CD4-positive, alpha-beta T cell (primary cell): ENCODE measurements at regions of chr17 and their contacts with region 1.

Region 1: GRCh38 chr17:909642-910323 is 69.8 kb downstream of the NXN start:
- DNase-seq: no peak
- ATAC-seq: no peak
- H3K4me3 ChIP-seq: no peak overlapping the region
- H3K4me3 Mint-ChIP-seq: no peak overlapping the region
- H3K27ac ChIP-seq: no peak overlapping the region
- H3K27ac Mint-ChIP-seq: no peak overlapping the region
- H3K4me1 ChIP-seq: no peaks in the 10 kb centered on the region
- H3K4me1 Mint-ChIP-seq: no peaks in the 10 kb centered on the region
- H3K27me3 ChIP-seq: peaks cover 0 to 4% of the 10 kb centered on the region in 2 experiments
- H3K27me3 Mint-ChIP-seq: peaks cover 44% of the 10 kb centered on the region
- CTCF ChIP-seq: no peak

Region 2: DNA sequence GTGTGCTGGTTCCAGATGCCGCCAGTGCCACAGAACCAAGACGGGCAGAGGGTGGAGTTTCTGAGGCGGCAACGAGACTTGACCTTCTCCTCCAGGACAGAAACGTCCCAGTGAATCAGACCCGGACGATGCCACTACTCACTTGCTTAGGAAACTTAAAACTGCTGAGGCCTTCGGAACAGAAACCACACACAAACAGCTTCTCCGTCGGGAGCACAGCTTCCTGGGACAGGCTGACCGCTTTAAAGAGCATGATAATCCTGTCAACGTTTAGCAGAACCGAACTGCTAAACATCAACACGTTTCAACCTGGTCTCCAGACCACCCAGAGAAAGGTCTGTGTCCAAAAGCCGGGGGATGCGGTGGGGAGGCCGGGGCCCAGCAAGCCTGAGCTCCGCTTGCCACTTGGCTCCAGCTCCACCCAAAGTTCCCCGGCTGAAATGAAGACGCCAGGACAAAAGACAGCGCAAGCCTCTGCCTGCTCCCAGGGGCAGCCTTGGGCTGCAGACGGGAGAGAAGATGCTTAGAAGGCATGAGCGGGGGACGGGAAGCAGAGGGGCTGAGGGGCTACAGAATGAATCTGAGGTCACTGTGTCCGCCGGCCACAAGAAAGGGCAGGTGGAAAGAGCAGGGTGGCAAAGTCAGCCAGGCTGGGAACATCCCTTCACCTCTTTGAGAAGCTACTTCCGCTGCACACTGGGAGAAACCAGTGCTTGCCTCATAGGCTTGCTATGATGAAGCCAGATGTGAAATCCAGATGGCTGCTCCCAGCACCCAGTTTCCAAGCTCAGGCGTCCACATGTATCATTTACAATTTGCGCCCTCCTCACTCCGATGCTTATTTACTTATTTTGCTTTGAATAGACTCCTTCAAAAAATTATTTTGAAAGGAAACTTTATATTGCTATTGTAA is 58.7 kb before region 1 on chr17:
- CTCF ChIA-PET with region 1: no interaction called
- POLR2A ChIA-PET with region 1: no interaction called
- intact Hi-C with region 1: loop called in 1 of 2 experiments (anchors 5 kb)
- DNase-seq: no peak
- ATAC-seq: no peak
- H3K4me3 ChIP-seq: no peak overlapping the region
- H3K4me3 Mint-ChIP-seq: no peak overlapping the region
- H3K27ac ChIP-seq: no peak overlapping the region
- H3K27ac Mint-ChIP-seq: no peak overlapping the region
- H3K4me1 ChIP-seq: peaks cover 8% of the 10 kb centered on the region
- H3K4me1 Mint-ChIP-seq: peaks cover 15% of the 10 kb centered on the region
- H3K27me3 ChIP-seq: peaks cover 11 to 23% of the 10 kb centered on the region in 2 experiments
- H3K27me3 Mint-ChIP-seq: peaks cover 43% of the 10 kb centered on the region
- CTCF ChIP-seq: no peak